IMR-90 (cell line): ENCODE measurements at regions of chr2 and their contacts with region 1.

Region 1: DNA sequence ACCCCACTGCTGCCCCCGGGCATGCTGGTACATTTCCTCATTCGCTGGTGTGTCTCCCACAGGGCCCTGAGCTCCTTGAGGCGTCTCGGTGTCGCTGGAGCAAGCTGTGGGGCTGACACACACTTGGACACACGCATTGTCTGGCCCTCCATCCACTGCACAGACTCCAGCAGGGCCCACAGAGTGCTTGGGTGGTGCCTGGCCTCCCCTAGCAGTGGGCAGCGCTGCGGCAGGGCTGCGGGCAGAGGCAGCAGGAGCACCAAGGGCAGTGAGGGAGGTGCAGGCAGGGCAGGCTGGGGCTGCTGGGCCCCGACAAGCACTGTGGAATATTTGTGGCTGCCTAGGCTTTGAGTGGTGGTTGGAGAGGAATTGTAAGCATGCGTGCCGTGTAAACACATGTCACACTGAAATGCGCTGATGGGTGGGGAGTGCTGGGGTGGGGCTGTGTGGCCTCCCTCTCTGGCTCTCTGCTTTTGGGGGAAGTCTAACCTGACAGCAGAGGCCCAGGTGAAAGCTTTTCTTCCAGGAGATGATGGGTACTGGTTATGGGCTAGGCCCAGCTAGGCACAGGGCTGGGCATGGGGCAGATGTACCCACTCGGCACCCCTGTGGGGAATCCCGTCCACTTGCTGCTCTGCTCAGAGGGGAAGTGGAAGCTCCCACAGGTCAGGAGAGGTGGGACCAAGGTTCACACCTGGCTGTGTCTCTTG is 55.5 kb upstream of the HS6ST1 start:
- DNase-seq: peak; percentile 87
- ATAC-seq: peak; percentile 94
- H3K4me3 ChIP-seq: no peak overlapping the region
- H3K27ac ChIP-seq: peak overlapping the region; percentile 59
- H3K4me1 ChIP-seq: peaks cover 28% of the 10 kb centered on the region
- H3K27me3 ChIP-seq: no peaks in the 10 kb centered on the region
- CTCF ChIP-seq: no peak
- POLR2A ChIP-seq: no peak
- RAD21 ChIP-seq: peak; percentile 23; the same call in 1 of the 2 replicates

Region 2: GRCh38 chr2:128329607-128330006 is 44.5 kb before region 1 on chr2:
- CTCF ChIA-PET with region 1: no interaction called
- POLR2A ChIA-PET with region 1: no interaction called
- dilution Hi-C with region 1: no loop called
- in situ Hi-C with region 1: no loop called
- intact Hi-C with region 1: loop called (anchors 2 kb)
- DNase-seq: peak; percentile 56
- ATAC-seq: peak; percentile 49
- H3K4me3 ChIP-seq: no peak overlapping the region
- H3K27ac ChIP-seq: peak overlapping the region; percentile 27; the same call in 1 of the 2 replicates
- H3K4me1 ChIP-seq: peaks cover 4% of the 10 kb centered on the region; the same call in 1 of the 2 replicates
- H3K27me3 ChIP-seq: no peaks in the 10 kb centered on the region
- CTCF ChIP-seq: no peak
- POLR2A ChIP-seq: no peak
- RAD21 ChIP-seq: no peak

Region 3: DNA sequence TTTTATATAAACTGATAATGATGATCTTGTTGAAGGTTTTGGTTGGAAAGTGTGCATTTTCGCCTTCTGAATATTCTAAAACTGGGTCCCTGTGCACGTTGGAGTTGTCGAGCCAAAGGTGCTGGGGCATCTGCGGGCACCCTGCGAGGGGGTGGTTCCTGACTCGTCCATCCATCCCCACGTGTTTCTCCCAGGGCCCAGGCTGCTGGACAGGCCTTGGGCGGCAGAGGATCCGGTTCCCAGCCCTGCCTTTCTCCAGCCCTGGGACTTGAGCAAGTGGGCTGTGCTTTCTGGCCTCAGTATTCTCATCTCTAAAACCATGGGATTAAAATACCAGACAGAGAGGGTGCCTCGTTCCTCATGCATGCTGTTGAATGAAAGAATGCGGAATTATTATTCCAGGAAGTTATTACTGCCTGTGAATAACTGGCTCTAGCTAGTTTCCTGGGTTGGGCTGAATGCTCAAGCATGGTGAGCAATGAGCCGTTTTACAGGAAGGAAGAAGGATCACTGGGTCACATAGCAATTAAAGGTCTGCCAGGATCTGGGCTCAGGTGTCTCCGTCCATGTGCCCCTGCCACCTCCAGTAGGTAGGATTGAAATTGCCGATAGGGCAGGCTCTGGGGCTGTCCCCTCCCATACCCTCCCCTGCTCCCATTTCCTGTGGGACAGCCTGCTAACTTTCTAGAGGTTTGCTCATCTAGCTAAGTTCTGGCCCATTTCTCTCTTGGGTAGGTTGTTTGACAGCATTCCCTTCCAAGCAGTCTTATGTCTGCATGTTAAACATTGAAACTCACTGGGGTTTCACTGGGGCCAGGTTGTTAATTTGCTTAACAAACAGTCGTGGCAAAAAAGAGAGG is 21.7 kb after region 1 on chr2:
- CTCF ChIA-PET with region 1: no interaction called
- POLR2A ChIA-PET with region 1: no interaction called
- dilution Hi-C with region 1: no loop called
- in situ Hi-C with region 1: no loop called
- intact Hi-C with region 1: no loop called
- DNase-seq: peak; percentile 10
- ATAC-seq: no peak; the same call in 1 of the 2 replicates
- H3K4me3 ChIP-seq: no peak overlapping the region
- H3K27ac ChIP-seq: no peak overlapping the region
- H3K4me1 ChIP-seq: peaks cover 5% of the 10 kb centered on the region
- H3K27me3 ChIP-seq: no peaks in the 10 kb centered on the region
- CTCF ChIP-seq: no peak
- POLR2A ChIP-seq: no peak
- RAD21 ChIP-seq: no peak